Activated CD4-positive, alpha-beta T cell treated with anti-CD3 and anti-CD28 coated beads, Interleukin-2, amount 10 ng/mL, durations not matched to agents 24 days and 14 days (primary cell): ENCODE measurements at regions of chr7 and their contacts with region 1.

Region 1: DNA sequence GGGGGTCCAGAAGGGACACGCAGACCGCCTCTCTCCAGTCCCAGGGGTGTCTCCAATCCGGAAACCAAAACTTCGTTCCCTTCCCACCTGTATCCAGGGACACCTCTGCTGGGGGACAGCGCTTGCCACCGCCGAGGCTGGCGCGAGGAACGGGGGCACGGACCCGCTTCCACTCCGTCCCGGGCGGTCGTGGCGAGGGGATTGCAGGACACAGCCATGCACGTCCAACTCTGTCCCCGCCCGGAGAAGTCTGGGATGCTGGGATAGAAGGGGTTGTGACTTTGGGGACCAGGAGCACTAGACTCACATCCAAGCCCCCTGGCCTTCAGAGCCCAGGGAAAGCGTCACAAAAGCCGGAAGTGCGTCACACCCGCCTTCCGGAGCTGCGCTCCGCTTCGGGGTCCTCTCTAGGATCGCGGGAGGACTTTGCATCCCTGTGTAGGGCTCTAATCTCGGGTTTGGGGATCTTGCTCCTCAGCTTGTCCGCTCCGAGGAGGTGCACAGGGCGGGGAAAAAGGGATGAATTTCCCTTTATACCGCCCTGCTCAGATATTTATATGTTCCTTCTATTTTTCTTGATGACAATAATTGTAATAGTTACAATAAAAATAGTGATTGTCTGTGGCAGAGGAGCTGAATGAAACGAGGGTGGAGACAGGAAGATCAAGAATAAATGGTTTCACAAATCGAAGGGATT is at the start of gene FAM200A:
- DNase-seq: peak; percentile 95
- H3K4me3 Mint-ChIP-seq: peak within 1 kb of the TSS; percentile 94
- H3K27ac Mint-ChIP-seq: peak within 1 kb of the TSS; percentile 91
- H3K4me1 Mint-ChIP-seq: peaks cover 21% of the 10 kb centered on the region
- H3K27me3 Mint-ChIP-seq: no peaks in the 10 kb centered on the region
- total RNA-seq, gene FAM200A: 4.7 and 5.8 TPM in 2 replicates

Region 2: DNA sequence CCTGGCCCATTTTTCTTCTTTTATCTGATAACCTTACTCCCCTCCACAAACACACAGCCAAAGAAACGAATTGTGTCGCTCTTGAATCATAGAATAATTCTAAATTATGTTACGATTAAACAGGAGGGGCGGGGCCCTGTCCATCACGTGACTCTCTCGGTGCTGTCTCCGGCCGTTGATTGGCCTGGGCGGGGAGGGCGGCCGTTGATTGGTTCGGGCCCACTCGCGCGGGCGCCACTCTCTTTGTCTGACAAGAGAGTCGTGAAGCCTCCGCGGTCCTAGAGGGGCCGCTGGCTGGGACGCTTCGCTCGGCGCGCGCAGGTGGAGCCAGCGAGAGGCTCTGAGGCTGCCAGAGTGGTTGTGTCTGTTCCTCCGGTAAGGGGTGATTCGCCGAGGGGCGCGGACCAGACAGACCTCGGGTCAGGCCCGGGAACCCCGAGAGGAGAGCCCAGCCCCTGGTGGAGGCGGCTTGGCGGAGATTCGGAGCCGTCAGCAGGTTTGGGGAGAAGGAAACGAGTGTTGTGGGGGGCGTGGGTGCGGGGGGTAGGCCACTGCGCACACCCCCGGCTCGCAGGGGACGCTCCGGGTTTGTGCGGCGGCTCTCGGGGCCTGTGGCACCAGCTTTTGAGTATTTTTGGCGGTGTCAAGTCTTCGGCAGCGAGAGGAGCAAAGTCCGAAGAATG is 79.2 kb before region 1 on chr7 and contains the start of gene ZNF789:
- intact Hi-C with region 1: loop called (anchors 10 kb)
- DNase-seq: peak; percentile 99
- H3K4me3 Mint-ChIP-seq: peak within 1 kb of the TSS; percentile 100
- H3K27ac Mint-ChIP-seq: peak within 1 kb of the TSS; percentile 93
- H3K4me1 Mint-ChIP-seq: peaks cover 28% of the 10 kb centered on the region
- H3K27me3 Mint-ChIP-seq: peaks cover 1% of the 10 kb centered on the region
- total RNA-seq, gene ZNF789: 22.6 and 23.6 TPM in 2 replicates

Region 3: GRCh38 chr7:99616359-99617191 is 64.7 kb after region 1 on chr7 and contains the start of gene ZSCAN25:
- intact Hi-C with region 1: loop called (anchors 1 kb)
- DNase-seq: peak; percentile 95
- H3K4me3 Mint-ChIP-seq: peak within 1 kb of the TSS; percentile 96
- H3K27ac Mint-ChIP-seq: peak within 1 kb of the TSS; percentile 97
- H3K4me1 Mint-ChIP-seq: peaks cover 35% of the 10 kb centered on the region
- H3K27me3 Mint-ChIP-seq: no peaks in the 10 kb centered on the region
- total RNA-seq, gene ZSCAN25: 29.4 and 30.0 TPM in 2 replicates

Region 4: GRCh38 chr7:100015232-100016209 is 463.6 kb after region 1 on chr7 and contains the start of gene ZKSCAN1:
- intact Hi-C with region 1: loop called (anchors 10 kb)
- DNase-seq: peak; percentile 96
- H3K4me3 Mint-ChIP-seq: peak within 1 kb of the TSS; percentile 95
- H3K27ac Mint-ChIP-seq: peak within 1 kb of the TSS; percentile 94
- H3K4me1 Mint-ChIP-seq: peaks cover 31% of the 10 kb centered on the region
- H3K27me3 Mint-ChIP-seq: no peaks in the 10 kb centered on the region
- total RNA-seq, gene ZKSCAN1: 54.8 and 56.3 TPM in 2 replicates